Activated CD4-positive, alpha-beta T cell treated with anti-CD3 and anti-CD28 coated beads, Interleukin-2, amount 10 ng/mL, durations not matched to agents 24 days and 14 days (primary cell): ENCODE measurements at regions of chr19 and their contacts with region 1.

Region 1: GRCh38 chr19:20776083-20777076 is at the start of gene ZNF66:
- DNase-seq: peak; percentile 98
- H3K4me3 Mint-ChIP-seq: peak within 1 kb of the TSS; percentile 96
- H3K27ac Mint-ChIP-seq: peak within 1 kb of the TSS; percentile 95
- H3K4me1 Mint-ChIP-seq: peaks cover 4% of the 10 kb centered on the region
- H3K27me3 Mint-ChIP-seq: no peaks in the 10 kb centered on the region
- total RNA-seq, gene ZNF66: 7.9 and 10.7 TPM in 2 replicates

Region 2: DNA sequence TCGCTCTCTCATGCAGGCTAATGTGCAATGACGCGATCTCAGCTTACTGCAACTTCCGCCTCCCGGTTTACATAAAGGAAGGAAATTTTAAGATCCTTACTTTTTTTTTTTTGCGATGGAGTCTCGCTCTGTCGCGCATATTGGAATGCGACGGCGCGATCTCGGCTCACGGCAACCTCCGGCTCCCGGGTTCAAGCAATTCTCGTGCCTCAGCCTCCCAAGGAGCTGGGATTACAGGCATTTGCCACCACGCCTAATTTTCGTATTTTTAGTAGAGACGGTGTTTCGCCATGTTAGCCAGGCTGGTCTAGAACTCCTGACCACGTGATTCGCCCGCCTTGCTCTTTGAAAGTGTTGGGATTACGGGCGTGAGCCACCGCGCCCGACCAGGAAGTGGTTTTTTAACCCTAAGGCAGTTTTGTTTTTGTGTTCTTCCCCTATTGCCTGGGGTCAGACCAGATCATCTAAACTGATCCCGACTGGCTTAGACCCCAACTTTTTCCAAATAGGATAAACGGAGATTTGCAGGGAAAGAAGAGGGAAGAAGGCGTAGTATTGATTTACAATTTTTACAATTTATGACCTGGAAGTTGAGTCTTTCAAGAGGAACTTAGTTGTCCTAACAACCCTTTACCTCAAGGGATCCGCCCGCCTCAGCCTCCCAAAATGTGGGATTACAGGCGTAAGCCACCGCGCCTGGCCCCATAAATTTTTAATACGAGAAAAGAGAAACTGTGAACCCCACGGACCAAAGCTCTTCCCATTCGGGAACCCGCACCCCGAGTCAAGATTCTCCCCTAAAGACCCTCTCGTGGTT is 352.8 kb before region 1 on chr19:
- intact Hi-C with region 1: loop called (anchors 5 kb)
- DNase-seq: peak; percentile 76
- H3K4me3 Mint-ChIP-seq: peak overlapping the region; percentile 97
- H3K27ac Mint-ChIP-seq: peak overlapping the region; percentile 98
- H3K4me1 Mint-ChIP-seq: peaks cover 3% of the 10 kb centered on the region
- H3K27me3 Mint-ChIP-seq: no peaks in the 10 kb centered on the region

Region 3: GRCh38 chr19:20565321-20566018 is 210.9 kb before region 1 on chr19 and contains the start of gene ZNF737:
- intact Hi-C with region 1: loop called (anchors 5 kb)
- DNase-seq: peak; percentile 96
- H3K4me3 Mint-ChIP-seq: peak within 1 kb of the TSS; percentile 99
- H3K27ac Mint-ChIP-seq: peak within 1 kb of the TSS; percentile 98
- H3K4me1 Mint-ChIP-seq: peaks cover 7% of the 10 kb centered on the region
- H3K27me3 Mint-ChIP-seq: no peaks in the 10 kb centered on the region
- total RNA-seq, gene ZNF737: 7.2 and 8.5 TPM in 2 replicates

Region 4: GRCh38 chr19:20912973-20913372 is 136.6 kb after region 1 on chr19:
- intact Hi-C with region 1: no loop called
- DNase-seq: no peak
- H3K4me3 Mint-ChIP-seq: no peak overlapping the region
- H3K27ac Mint-ChIP-seq: no peak overlapping the region
- H3K4me1 Mint-ChIP-seq: no peaks in the 10 kb centered on the region
- H3K27me3 Mint-ChIP-seq: no peaks in the 10 kb centered on the region

Region 5: GRCh38 chr19:20923077-20923871 is 146.9 kb after region 1 on chr19 and contains the start of gene ZNF85:
- intact Hi-C with region 1: loop called (anchors 5 kb)
- DNase-seq: peak; percentile 96
- H3K4me3 Mint-ChIP-seq: peak within 1 kb of the TSS; percentile 98
- H3K27ac Mint-ChIP-seq: peak within 1 kb of the TSS; percentile 98
- H3K4me1 Mint-ChIP-seq: peaks cover 9% of the 10 kb centered on the region
- H3K27me3 Mint-ChIP-seq: no peaks in the 10 kb centered on the region
- total RNA-seq, gene ZNF85: 9.9 and 11.9 TPM in 2 replicates

Region 6: DNA sequence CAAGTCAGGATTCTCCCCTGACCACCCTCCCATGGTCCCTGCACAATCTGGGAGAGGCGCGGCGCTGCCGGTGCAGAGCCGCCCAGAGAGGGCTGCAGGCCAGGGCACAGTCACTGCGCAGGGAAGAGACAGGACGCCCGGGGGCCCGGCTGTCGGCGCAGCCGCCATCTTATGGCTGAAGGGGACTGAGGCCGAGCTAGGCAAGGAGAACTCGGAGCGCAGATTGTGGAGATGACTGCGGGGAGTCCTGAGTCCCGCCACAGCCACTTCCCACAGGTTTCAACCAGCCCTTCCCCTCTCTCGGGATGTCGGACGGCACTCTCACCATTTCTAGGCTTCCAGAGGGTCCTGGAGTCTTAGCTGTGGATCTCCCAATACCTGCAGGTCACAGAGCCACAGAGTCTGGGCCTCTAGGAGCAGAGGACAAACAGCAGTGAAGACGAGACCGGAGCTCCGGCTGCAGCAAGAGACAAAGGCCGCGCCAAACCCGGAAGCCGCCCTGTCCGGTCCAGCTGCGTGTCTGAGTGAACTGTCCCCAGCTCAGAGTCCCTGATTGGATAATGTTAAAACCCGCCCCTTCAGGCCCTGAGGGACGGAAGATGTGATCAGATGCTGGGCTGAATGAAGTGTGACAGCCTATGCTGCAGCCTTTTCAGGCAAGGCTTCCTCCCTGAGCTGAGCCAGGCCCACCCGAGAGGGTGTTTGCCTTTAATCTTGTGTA is 552.7 kb after region 1 on chr19 and contains the start of gene ZNF708:
- intact Hi-C with region 1: loop called (anchors 2 kb)
- DNase-seq: peak; percentile 94
- H3K4me3 Mint-ChIP-seq: peak within 1 kb of the TSS; percentile 94
- H3K27ac Mint-ChIP-seq: peak within 1 kb of the TSS; percentile 100
- H3K4me1 Mint-ChIP-seq: peaks cover 17% of the 10 kb centered on the region
- H3K27me3 Mint-ChIP-seq: no peaks in the 10 kb centered on the region
- total RNA-seq, gene ZNF708: 10.1 TPM in 2 replicates

Region 7: DNA sequence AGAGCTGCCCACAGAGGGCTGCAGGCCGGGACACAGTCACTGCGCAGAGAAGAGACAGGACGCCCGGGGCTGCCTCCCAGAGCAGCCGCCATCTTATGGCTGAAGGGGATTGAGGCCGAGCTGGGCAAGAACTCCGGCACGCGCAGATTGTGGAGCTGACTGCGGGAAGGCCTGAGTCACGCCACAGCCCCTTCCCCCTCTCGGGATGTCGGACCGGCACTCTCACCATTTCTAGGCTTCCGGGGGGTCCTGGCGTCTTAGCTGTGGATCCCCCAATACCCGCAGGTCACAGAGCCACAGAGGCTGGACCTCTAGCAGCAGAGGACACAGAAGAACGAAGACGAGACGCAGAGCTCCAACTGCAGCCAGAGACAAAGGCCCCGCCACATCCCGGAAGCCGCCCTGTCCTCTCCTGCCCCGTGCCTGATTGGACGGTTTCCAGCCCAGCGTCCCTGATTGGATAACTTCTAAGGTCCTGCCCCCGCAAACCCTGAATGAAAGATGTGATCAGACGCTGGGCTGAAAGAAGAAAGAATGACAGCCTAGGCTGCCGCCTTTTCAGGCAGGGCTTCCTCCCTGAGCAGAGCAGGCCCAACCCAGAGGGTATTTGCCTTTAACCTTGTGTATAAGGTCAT is 1059.5 kb after region 1 on chr19 and contains the start of gene ZNF43:
- intact Hi-C with region 1: loop called (anchors 5 kb)
- DNase-seq: peak; percentile 96
- H3K4me3 Mint-ChIP-seq: peak within 1 kb of the TSS; percentile 100
- H3K27ac Mint-ChIP-seq: peak within 1 kb of the TSS; percentile 100
- H3K4me1 Mint-ChIP-seq: peaks cover 3% of the 10 kb centered on the region
- H3K27me3 Mint-ChIP-seq: no peaks in the 10 kb centered on the region
- total RNA-seq, gene ZNF43: 30.3 and 33.3 TPM in 2 replicates